BJ (cell line): ENCODE measurements at regions of chr12 and their contacts with region 1.

Region 1: GRCh38 chr12:110431957-110432587 is 18.1 kb downstream of the ARPC3 start:
- DNase-seq: no peak
- H3K4me3 ChIP-seq: peak overlapping the region; percentile 40; the same call in 1 of the 2 replicates
- H3K27me3 ChIP-seq: no peaks in the 10 kb centered on the region
- CTCF ChIP-seq: no peak

Region 2: DNA sequence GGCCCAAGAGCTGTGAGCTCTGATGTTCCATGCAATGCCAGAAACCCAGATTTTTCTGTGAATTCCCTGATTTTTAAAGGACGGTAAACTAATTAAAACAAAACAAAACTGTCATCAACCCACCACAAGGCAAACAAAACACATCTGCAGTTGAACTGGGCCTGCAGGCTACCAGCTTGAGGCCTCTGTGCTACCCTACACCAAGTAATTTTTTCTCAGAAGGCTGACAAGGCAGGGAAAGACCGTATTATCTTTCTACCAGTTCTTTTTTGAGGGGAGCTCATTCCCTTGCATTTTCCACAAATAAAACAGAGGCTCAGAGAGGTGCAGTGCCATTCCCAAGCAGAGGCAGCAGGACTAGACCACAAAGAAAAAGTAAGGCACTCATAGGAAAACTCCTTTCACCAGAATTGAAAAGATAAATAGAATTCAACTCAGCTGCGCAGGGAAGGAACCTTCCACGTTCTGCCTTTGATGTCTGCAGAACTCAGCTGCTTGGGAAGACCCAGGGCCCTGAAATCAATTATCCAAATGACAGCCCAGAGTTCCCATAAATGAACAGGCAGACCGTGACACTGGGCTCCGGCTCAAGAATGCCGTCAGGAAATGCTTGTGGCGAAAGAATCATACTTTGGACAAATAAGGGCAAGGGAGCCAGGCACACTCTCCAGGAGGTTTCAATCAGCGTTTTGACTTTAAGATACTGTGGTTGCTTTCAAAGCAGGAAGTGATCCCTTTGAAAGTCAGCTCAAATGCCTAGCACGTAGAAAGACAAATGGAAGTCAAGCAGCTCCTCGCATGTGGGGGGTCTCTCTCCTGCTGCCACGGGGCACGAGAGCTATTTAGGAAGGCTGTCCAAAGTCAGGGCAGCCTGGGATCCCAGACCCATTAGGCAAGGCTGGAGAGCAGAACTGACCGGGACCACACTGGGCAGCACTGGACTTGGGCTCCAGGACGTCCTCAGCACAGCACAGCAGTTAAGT is 969.1 kb before region 1 on chr12:
- CTCF ChIA-PET with region 1: no interaction called
- POLR2A ChIA-PET with region 1: interaction called, 11 read pairs
- DNase-seq: peak; percentile 95
- H3K4me3 ChIP-seq: no peak overlapping the region
- H3K27me3 ChIP-seq: no peaks in the 10 kb centered on the region
- CTCF ChIP-seq: no peak

Region 3: DNA sequence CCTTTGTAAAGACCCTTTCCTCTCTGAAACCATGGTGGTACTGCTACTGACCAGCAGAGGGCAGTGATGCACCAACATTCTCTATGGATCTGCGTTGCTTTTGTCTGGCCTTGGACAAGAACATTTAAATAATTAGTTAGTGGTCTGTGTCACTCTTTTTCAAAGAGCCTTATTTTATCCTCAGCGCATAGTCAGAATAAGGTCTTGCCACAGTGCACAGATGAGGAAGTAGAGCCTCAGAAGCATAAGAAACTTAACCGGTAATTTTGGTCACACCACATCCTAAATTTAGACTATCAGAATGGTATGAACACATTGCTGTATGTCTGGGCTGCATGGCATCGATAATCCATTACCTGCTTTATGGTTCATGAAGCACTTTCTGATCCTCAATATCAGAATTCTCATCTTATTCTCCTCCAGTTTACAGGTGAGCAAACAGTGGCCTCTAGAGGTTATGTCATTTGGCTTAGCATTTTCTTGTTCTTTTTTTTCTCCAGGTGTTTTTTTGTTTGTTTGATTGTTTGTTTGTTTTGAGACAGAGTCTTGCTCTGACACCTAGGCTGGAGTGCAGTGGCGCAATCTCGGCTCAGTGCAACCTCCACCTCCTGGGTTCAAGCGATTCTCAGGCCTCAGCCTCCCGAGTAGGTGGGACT is 331.6 kb before region 1 on chr12:
- CTCF ChIA-PET with region 1: interaction called, 38 read pairs
- POLR2A ChIA-PET with region 1: interaction called, 3 read pairs
- DNase-seq: no peak
- H3K4me3 ChIP-seq: no peak overlapping the region
- H3K27me3 ChIP-seq: no peaks in the 10 kb centered on the region
- CTCF ChIP-seq: peak; percentile 85

Region 4: DNA sequence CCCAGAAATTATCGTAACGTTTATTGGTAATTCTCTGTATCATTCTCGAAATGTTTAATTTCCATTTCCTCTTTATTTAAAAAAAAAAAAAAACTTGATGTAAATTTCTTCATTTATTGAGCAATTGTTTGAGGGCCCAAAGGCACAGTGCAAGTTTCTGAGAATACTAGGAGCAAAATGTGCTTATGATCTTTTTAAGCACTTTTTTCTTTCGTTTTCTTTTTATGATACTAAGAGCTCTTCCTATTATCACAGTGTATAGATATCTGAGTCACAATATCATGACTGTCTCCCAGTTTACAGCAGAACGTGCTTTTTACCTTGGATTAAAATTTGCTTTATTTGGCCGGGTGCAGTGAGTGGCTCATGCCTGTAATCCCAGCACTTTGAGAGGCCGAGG is 145.4 kb before region 1 on chr12:
- CTCF ChIA-PET with region 1: interaction called, 3 read pairs
- POLR2A ChIA-PET with region 1: interaction called, 23 read pairs
- DNase-seq: no peak
- H3K4me3 ChIP-seq: no peak overlapping the region
- H3K27me3 ChIP-seq: no peaks in the 10 kb centered on the region
- CTCF ChIP-seq: no peak

Region 5: GRCh38 chr12:110338754-110339153 is 93.3 kb before region 1 on chr12:
- CTCF ChIA-PET with region 1: interaction called, 3 read pairs
- POLR2A ChIA-PET with region 1: interaction called, 14 read pairs
- DNase-seq: no peak
- H3K4me3 ChIP-seq: no peak overlapping the region
- H3K27me3 ChIP-seq: no peaks in the 10 kb centered on the region
- CTCF ChIP-seq: no peak

Region 6: DNA sequence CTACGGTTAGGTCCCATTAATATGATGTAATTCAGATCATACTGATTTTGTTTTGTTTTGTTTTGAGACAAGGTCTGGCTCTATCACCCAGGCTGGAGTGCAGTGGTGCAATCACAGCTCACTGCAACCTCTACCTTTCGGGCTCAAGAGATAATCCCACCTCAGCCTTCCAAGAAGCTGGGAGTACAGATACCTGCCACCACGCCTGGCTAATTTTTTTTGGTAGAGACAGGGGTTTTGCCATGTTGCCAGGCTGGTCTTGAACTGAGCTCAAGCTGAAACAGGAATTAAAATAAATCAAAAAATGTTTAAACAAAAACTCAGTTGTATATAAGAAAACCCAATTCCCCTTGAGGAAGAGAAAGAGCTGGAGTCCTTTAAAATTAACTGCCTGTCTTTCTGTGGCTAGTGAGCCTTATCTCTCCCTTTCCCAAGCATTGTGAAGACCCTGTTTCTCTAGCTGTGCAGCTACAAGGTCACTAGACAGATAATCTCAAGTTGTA is 10.9 kb before region 1 on chr12:
- CTCF ChIA-PET with region 1: interaction called, 18 read pairs
- POLR2A ChIA-PET with region 1: no interaction called
- DNase-seq: no peak
- H3K4me3 ChIP-seq: no peak overlapping the region
- H3K27me3 ChIP-seq: no peaks in the 10 kb centered on the region
- CTCF ChIP-seq: no peak

Region 7: GRCh38 chr12:110501752-110502738 is 70.0 kb after region 1 on chr12 and contains the starts of genes RAD9B and VPS29:
- CTCF ChIA-PET with region 1: no interaction called
- POLR2A ChIA-PET with region 1: no interaction called
- DNase-seq: peak; percentile 90
- H3K4me3 ChIP-seq: peak within 1 kb of the TSS; percentile 95
- H3K27me3 ChIP-seq: no peaks in the 10 kb centered on the region
- CTCF ChIP-seq: no peak
- polyA plus RNA-seq, gene RAD9B: 0.33 and 0.69 TPM in 2 replicates
- polyA plus RNA-seq, gene VPS29: 98.8 and 148 TPM in 2 replicates